ENCODE measurements at regions of chr6 and their contacts with region 1.

Region 1: GRCh38 chr6:69995870-69996269 is 129.5 kb downstream of the COL19A1 start:
- DNase-seq: no peak
- CTCF ChIP-seq: no peak

Region 2: DNA sequence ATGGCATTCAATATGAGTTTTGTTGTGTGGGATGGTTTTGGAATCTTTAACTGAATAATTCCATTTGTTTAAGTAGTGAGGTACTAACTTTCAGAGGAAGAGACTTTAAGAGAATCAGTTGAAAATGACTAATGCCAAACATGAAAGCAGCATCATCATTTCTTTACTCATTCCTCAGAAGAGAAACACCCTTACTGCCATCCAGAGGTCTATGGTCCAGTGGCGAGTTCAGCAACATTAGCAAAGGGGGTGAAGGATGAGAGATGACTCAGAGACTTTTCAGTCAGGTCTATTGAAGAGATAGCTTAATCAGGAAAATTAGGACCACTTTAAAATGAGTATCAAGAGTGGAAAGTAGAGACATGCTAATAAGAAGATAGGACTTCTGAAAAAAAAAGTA is 10.7 kb before region 1 on chr6:
- CTCF ChIA-PET with region 1: interaction called, 13 read pairs
- POLR2A ChIA-PET with region 1: no interaction called
- DNase-seq: no peak
- CTCF ChIP-seq: peak; percentile 12

Region 3: GRCh38 chr6:70045413-70045812 is 49.5 kb after region 1 on chr6:
- CTCF ChIA-PET with region 1: no interaction called
- POLR2A ChIA-PET with region 1: no interaction called
- DNase-seq: no peak
- CTCF ChIP-seq: no peak